Dorsolateral prefrontal cortex (tissue), 120 donors: ENCODE measurements at regions of chr4 and their contacts with region 1.

Region 1: GRCh38 chr4:89657931-89658700 is 178.8 kb downstream of the SNCA start:
- DNase-seq: no peak
- H3K4me3 ChIP-seq: no peak overlapping the region
- H3K27ac ChIP-seq: no peak overlapping the region
- H3K27me3 ChIP-seq: no peaks in the 10 kb centered on the region
- CTCF ChIP-seq: peak; percentile 22 to 91 (median 68)

Region 2: GRCh38 chr4:89868999-89869589 is 211.0 kb after region 1 on chr4:
- intact Hi-C with region 1: loop called (anchors 2 to 5 kb)
- DNase-seq: no peak
- H3K4me3 ChIP-seq: no peak overlapping the region
- H3K27ac ChIP-seq: no peak overlapping the region
- H3K27me3 ChIP-seq: no peaks in the 10 kb centered on the region
- CTCF ChIP-seq: peak; percentile 53 to 87 (median 71)